ENCODE measurements at regions of chrX and their contacts with region 1.

Region 1: GRCh38 chrX:155026726-155027508 is at the start of gene FUNDC2:
- DNase-seq: peak; percentile 93
- H3K4me3 Mint-ChIP-seq: peak within 1 kb of the TSS; percentile 72
- H3K27ac Mint-ChIP-seq: peak within 1 kb of the TSS; percentile 84
- H3K4me1 Mint-ChIP-seq: peaks cover 20% of the 10 kb centered on the region
- H3K27me3 Mint-ChIP-seq: no peaks in the 10 kb centered on the region
- CTCF ChIP-seq: no peak
- total RNA-seq, gene FUNDC2: 33.5 and 45.4 TPM in 2 replicates

Region 2: DNA sequence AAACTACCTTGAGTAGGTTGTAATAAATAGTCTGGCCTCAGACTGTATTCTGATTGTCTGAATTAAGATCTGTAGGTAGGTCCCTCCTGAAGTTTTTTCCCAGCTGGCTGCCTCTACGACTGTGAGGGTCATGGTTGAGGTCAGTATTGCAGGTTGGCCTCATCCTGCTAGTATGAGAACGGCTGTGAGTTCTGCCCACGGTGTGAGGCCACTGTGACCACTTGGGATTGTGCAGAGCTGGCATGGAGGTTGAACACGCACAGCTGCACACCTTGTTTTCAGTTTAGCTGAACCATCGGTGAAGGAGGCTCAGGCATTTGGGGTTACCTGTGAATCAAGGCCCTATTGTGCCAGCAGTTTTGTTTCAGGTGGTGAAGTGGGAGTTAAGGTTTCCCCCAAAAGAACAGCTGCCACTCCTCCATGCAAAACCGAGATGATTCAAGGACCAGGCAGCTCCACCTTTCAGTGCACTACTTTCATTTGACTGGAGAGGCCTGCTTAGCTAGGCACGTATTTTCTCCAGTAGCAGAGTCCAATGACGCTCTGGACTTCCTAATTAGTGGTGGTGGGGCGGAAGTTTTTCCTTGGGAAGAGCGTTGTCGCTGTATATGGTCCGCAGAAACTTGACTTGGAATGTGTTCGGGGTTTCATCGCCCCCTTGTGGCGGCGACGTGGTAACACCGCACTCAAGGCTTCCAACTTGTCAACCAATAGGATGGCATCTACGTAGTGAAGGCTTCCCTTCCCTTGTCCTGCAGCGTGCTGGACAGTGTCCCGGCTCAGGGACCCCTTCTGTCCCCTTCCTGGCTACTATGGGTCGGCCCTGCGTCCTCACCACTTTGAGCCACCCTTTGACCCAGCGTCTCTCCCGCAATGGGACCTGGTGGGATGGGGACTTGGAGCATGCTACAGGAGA is 30.2 kb after region 1 on chrX:
- CTCF ChIA-PET with region 1: no interaction called
- intact Hi-C with region 1: loop called (anchors 2 kb)
- DNase-seq: peak; percentile 69
- H3K4me3 Mint-ChIP-seq: peak overlapping the region; percentile 36
- H3K27ac Mint-ChIP-seq: no peak overlapping the region
- H3K4me1 Mint-ChIP-seq: peaks cover 15% of the 10 kb centered on the region
- H3K27me3 Mint-ChIP-seq: no peaks in the 10 kb centered on the region
- CTCF ChIP-seq: peak; percentile 61

Region 3: GRCh38 chrX:155216179-155216939 is 189.4 kb after region 1 on chrX and contains the start of gene VBP1:
- CTCF ChIA-PET with region 1: no interaction called
- intact Hi-C with region 1: no loop called
- DNase-seq: peak; percentile 91
- H3K4me3 Mint-ChIP-seq: peak within 1 kb of the TSS; percentile 84
- H3K27ac Mint-ChIP-seq: peak within 1 kb of the TSS; percentile 67
- H3K4me1 Mint-ChIP-seq: peaks cover 8% of the 10 kb centered on the region
- H3K27me3 Mint-ChIP-seq: no peaks in the 10 kb centered on the region
- CTCF ChIP-seq: peak; percentile 56
- total RNA-seq, gene VBP1: 56.3 and 58.1 TPM in 2 replicates

Measured in Calu3 (cell line).